Heart left ventricle (tissue), 16 donors: ENCODE measurements at regions of chr3 and their contacts with region 1.

Region 1: GRCh38 chr3:26712211-26713026 is 89.8 kb downstream of the LRRC3B start:
- DNase-seq: peak in 1 of 5 donors; percentile 11
- ATAC-seq: peak in 2 of 4 donors; percentile 49 to 62
- H3K4me3 ChIP-seq: no peak overlapping the region
- H3K27ac ChIP-seq: no peak overlapping the region
- H3K4me1 ChIP-seq: peaks cover 0 to 3% (median 0%) of the 10 kb centered on the region in 12 donors
- H3K27me3 ChIP-seq: no peaks in the 10 kb centered on the region
- CTCF ChIP-seq: peak; percentile 54 to 85 (median 70)
- POLR2A ChIP-seq: no peak

Region 2: GRCh38 chr3:25648107-25648535 is 1064.3 kb before region 1 on chr3:
- intact Hi-C with region 1: loop called in 8 of 10 experiments (anchors 2 to 5 kb)
- DNase-seq: peak in 4 of 5 donors; percentile 45 to 66 (median 65)
- ATAC-seq: peak; percentile 74 to 95 (median 91)
- H3K4me3 ChIP-seq: no peak overlapping the region
- H3K27ac ChIP-seq: no peak overlapping the region
- H3K4me1 ChIP-seq: peaks cover 0 to 39% (median 17%) of the 10 kb centered on the region in 12 donors
- H3K27me3 ChIP-seq: no peaks in the 10 kb centered on the region
- CTCF ChIP-seq: peak; percentile 78 to 90 (median 86)
- POLR2A ChIP-seq: no peak

Region 3: DNA sequence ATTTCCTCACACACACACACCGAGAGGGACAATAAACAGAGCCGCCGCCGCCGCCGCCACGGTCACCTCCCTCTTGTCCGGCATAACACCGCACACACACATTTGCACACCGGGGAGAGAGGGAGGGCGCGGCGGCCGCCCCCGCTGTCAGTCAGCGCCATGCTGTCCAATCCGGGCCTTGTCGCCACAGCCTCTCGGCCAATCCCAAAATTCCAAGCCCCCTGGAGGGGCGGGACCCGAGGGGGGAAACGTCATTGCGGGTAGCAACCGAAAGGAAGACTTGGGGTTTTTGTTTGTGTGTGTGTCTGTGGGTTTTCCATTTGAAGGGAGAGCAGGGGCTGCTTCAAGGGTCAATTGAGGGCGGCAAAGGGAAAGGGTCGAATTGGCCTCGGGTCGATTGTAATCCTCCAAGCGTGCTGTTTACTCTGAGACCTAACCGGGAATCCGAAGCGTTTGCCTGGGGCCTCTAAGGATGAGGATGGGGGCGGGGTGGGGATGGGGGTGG is 1047.6 kb before region 1 on chr3 and contains the start of gene TOP2B:
- intact Hi-C with region 1: loop called in 1 of 10 experiments (anchors 10 kb)
- DNase-seq: peak; percentile 96 to 97 (median 97)
- ATAC-seq: peak; percentile 99 to 100 (median 100)
- H3K4me3 ChIP-seq: peak within 1 kb of the TSS; percentile 54 to 97 (median 78)
- H3K27ac ChIP-seq: peak within 1 kb of the TSS; percentile 94 to 99 (median 96)
- H3K4me1 ChIP-seq: peaks cover 9 to 43% (median 35%) of the 10 kb centered on the region in 12 donors
- H3K27me3 ChIP-seq: no peaks in the 10 kb centered on the region
- CTCF ChIP-seq: no peak
- POLR2A ChIP-seq: peak; percentile 81 to 98
- total RNA-seq, gene TOP2B: 65.1 to 124 (median 98.4) TPM

Region 4: GRCh38 chr3:25843332-25843731 is 869.1 kb before region 1 on chr3:
- intact Hi-C with region 1: loop called in 5 of 10 experiments (anchors 2 to 10 kb)
- DNase-seq: no peak
- ATAC-seq: no peak
- H3K4me3 ChIP-seq: no peak overlapping the region
- H3K27ac ChIP-seq: no peak overlapping the region
- H3K4me1 ChIP-seq: no peaks in the 10 kb centered on the region
- H3K27me3 ChIP-seq: no peaks in the 10 kb centered on the region
- CTCF ChIP-seq: peak in 9 of 12 donors; percentile 17 to 49 (median 39)
- POLR2A ChIP-seq: no peak

Region 5: GRCh38 chr3:25904206-25904605 is 808.2 kb before region 1 on chr3:
- intact Hi-C with region 1: loop called (anchors 2 to 5 kb)
- DNase-seq: peak in 3 of 5 donors; percentile 19 to 27 (median 25)
- ATAC-seq: peak; percentile 64 to 86 (median 82)
- H3K4me3 ChIP-seq: no peak overlapping the region
- H3K27ac ChIP-seq: no peak overlapping the region
- H3K4me1 ChIP-seq: peaks cover 0 to 13% (median 0%) of the 10 kb centered on the region in 12 donors
- H3K27me3 ChIP-seq: no peaks in the 10 kb centered on the region
- CTCF ChIP-seq: peak; percentile 24 to 73 (median 58)
- POLR2A ChIP-seq: no peak